Breast epithelium (tissue), 4 donors: ENCODE measurements at regions of chr6 and their contacts with region 1.

Region 1: DNA sequence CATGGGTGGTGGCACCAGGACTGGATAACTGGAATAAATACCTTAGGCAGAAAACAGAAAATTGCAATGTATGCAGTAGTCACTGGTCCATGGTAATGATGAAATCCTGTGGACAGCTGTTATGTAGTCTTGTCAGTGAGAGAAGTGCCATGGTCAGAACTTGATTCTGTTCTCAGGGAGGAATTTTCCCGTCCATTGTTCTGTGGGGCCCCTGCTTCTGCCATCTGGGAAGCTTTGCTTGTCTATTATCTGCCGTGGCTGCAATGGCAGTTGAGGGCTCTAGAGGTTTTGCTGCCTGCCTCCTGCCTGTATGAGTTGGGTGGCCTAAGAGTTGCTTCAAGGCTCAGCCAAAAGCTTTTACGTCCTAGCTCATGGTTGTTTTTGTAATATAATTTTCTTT is 126.8 kb upstream of the SLC35B3 start:
- DNase-seq: no peak
- H3K4me3 ChIP-seq: no peak overlapping the region
- H3K27ac ChIP-seq: no peak overlapping the region
- H3K4me1 ChIP-seq: no peaks in the 10 kb centered on the region
- H3K27me3 ChIP-seq: no peaks in the 10 kb centered on the region
- CTCF ChIP-seq: no peak
- POLR2A ChIP-seq: no peak

Region 2: DNA sequence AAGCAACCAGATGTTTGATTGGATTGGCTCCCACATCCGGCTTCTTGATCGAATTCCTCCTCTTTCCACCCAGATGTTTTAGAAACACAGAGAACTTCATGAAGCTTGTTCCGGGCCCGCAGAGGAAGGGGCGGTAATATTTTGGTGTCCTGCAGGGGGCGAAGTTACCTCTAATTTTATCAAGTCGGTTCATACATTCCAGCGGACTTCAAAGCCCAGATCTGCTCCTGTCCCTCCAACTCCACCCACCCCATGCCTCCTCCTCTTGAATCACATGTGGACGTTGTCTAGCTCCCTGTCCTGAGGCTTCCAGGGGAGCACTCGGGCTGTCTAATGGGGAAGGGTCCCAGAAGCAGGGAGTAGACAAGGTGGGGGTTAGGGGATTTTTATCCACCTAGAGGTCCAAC is 839.1 kb before region 1 on chr6:
- intact Hi-C with region 1: loop called (anchors 5 kb)
- DNase-seq: peak; percentile 63 to 80
- H3K4me3 ChIP-seq: no peak overlapping the region
- H3K27ac ChIP-seq: no peak overlapping the region
- H3K4me1 ChIP-seq: peaks cover 0 to 11% of the 10 kb centered on the region in 2 donors
- H3K27me3 ChIP-seq: peaks cover 3 to 24% of the 10 kb centered on the region in 2 donors
- CTCF ChIP-seq: peak; percentile 52 to 76 (median 57)
- POLR2A ChIP-seq: no peak

Region 3: GRCh38 chr6:8499540-8499939 is 62.6 kb before region 1 on chr6:
- intact Hi-C with region 1: no loop called
- DNase-seq: no peak
- H3K4me3 ChIP-seq: no peak overlapping the region
- H3K27ac ChIP-seq: no peak overlapping the region
- H3K4me1 ChIP-seq: no peaks in the 10 kb centered on the region
- H3K27me3 ChIP-seq: no peaks in the 10 kb centered on the region
- CTCF ChIP-seq: no peak
- POLR2A ChIP-seq: no peak